ENCODE measurements at regions of chr1 and their contacts with region 1.

Region 1: DNA sequence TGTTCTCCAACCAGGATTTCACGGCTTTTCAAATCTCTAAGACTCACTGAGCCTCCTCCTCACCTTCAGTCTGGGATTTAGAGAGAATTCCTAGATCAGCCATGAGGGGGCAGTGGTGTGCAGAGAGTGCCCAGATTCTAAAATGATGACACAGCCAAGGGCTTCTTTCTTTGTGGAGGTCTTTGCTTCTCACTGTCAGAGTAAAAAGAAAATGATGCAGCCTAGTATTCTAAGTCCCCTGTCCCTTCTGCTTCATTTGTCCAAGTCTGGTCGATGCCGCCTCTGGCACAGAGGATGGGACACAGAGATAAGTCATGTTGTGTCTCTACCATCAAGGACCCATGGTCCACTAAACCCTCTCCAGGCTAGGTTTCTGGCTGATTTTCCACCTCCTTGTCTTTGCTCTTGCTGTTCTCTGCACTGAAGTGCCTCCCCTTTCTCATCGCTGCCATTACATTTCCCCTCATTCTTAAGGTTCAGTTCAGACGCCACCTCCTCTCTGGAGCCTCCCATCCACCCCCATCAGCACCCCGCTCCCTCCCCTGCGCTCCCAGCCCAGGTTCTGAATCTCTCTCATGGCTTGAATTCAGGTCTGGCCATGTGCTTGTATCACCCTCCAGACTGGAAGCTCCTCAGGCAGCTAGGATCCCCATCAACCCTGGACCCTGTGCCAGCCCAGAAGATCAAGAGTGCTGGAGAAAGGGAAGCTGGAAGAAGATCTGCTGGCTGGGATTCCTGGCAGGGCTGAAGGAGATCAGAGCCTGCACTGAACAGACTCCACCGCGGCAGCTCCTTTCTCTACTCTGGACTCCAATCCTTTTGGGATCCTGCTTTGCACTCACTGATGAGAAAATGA is 12.0 kb upstream of the TINAGL1 start:
- DNase-seq: peak; percentile 76

Region 2: DNA sequence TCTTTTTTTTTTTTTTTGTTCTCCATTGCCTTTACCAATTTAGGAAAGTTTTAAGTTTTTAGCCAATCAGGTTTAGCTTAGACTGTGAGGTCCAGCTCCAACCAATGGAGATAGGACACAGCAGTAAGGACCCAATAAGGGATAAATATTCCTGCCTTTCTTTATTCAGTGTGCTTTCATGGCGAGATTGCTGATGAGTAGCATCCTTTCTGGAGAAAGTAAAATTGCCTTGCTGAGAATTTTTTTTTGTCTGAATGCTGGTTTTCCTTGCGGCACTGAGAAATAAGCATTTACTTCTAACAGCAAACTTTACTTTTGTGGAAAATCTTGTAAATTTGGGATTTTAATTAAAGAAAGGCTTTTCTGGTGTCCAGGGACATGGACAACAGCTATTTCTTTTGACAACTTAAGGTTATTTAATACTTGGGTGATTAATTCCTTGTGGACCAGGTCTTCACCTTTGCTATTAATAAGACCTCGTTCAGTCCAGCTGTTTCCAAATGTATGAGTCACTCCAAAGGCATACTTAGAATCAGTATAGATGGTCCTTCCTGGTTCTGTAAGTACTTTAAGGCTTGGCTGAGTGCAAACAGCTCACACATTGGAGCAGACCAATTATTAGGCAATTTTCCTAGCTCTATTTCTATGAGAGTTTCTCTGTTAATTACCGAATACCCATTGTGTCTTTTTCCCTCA is 97.2 kb before region 1 on chr1:
- intact Hi-C with region 1: no loop called
- DNase-seq: no peak

Region 3: GRCh38 chr1:31593770-31594632 is 29.6 kb after region 1 on chr1:
- intact Hi-C with region 1: loop called (anchors 1 kb)
- DNase-seq: peak; percentile 92

Region 4: GRCh38 chr1:31705080-31705866 is 140.9 kb after region 1 on chr1:
- intact Hi-C with region 1: no loop called
- DNase-seq: no peak